CD4-positive, alpha-beta T cell (primary cell): ENCODE measurements at regions of chr16 and their contacts with region 1.

Region 1: DNA sequence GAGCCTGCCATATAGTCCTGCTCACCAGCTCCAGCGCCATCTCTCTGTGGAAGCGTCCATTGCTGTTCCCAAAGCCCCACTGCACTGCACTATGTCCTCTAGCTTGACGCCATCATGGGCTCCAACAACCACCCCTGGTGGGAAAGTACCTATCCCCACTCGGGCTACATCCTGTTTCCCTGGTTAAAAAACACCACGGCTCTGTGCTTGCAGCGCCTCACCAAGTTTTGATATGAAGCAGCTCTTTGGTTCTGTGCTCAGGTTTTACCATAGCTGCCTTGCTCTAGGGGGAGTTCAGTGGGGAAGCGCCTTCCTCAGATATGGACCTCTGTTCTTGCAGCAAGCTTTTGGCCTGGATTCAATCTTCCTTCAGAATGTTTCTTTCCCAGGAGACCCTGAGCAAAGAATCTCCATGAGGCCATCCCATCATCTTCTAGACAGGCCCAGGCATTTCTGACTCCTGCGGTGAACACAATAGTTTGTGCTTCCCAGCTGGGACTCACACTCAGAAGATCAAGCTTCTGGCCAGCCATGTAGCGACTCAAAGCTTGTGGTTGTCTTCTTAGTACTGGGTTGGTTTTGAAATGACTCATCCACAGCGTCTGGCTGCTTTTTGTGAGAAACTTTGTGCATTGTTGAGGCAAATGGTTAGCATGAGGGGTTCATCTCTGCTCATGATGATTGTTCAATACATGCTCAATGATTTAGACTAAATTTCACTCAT is 39.5 kb downstream of the DYNLRB2 start:
- DNase-seq: peak; percentile 36 to 82 (median 46)
- ATAC-seq: peak; percentile 92
- H3K4me3 ChIP-seq: peak overlapping the region; percentile 13
- H3K4me3 Mint-ChIP-seq: peak overlapping the region; percentile 52
- H3K27ac ChIP-seq: peak overlapping the region; percentile 60 to 64
- H3K27ac Mint-ChIP-seq: peak overlapping the region; percentile 80
- H3K4me1 ChIP-seq: peaks cover 38% of the 10 kb centered on the region
- H3K4me1 Mint-ChIP-seq: peaks cover 31% of the 10 kb centered on the region
- H3K27me3 ChIP-seq: no peaks in the 10 kb centered on the region
- H3K27me3 Mint-ChIP-seq: no peaks in the 10 kb centered on the region
- CTCF ChIP-seq: no peak

Region 2: DNA sequence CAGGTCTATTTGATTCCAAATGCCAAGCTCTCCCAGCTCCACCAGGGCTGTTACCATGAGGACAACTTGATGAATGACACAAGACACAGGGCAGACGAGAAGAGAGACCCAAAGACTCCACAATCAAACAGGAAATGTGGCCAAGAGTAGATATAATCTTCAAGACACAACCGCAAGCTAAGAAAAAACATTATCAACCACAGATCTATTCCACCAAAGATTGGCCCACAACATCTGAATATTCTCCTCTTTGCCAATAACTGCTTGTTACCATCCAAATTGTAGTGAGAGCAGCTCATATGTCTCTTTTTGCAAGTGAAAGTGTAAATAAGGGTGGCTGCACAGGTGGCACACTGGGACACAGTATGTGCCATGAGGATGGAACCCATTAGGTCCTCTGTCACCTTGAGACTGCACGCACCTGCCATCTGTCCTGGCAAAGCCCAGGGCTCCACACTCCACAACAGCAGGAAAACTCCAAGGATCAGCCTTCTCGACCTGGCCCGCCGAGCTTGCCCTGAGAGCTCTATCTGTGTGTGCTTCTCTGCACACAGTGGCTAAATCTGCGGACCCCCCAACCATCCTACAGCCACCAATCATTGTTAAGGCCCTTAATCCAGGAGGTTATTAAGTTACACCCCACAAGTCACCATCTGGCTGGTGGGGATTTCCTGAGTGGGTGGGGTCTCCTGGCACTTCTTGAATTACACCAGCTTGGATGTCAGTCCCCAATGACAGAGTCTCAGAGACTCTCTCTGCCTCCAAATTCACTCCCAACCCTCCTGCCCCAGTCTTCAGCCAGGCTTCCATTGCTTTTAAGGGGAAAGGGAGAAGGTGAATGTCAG is 11.0 kb after region 1 on chr16:
- CTCF ChIA-PET with region 1: interaction called, 3 read pairs
- POLR2A ChIA-PET with region 1: interaction called, 37 read pairs
- intact Hi-C with region 1: loop called in 1 of 2 experiments (anchors 1 kb)
- DNase-seq: peak in 7 of 14 experiments; percentile 1 to 80 (median 35)
- ATAC-seq: peak; percentile 84
- H3K4me3 ChIP-seq: peak overlapping the region; percentile 13
- H3K4me3 Mint-ChIP-seq: peak overlapping the region; percentile 17
- H3K27ac ChIP-seq: no peak overlapping the region
- H3K27ac Mint-ChIP-seq: peak overlapping the region; percentile 13
- H3K4me1 ChIP-seq: peaks cover 21% of the 10 kb centered on the region
- H3K4me1 Mint-ChIP-seq: peaks cover 24% of the 10 kb centered on the region
- H3K27me3 ChIP-seq: no peaks in the 10 kb centered on the region
- H3K27me3 Mint-ChIP-seq: no peaks in the 10 kb centered on the region
- CTCF ChIP-seq: no peak

Region 3: GRCh38 chr16:80610188-80611156 is 30.2 kb after region 1 on chr16:
- CTCF ChIA-PET with region 1: no interaction called
- POLR2A ChIA-PET with region 1: no interaction called
- intact Hi-C with region 1: no loop called
- DNase-seq: no peak
- ATAC-seq: no peak
- H3K4me3 ChIP-seq: no peak overlapping the region
- H3K4me3 Mint-ChIP-seq: no peak overlapping the region
- H3K27ac ChIP-seq: no peak overlapping the region
- H3K27ac Mint-ChIP-seq: no peak overlapping the region
- H3K4me1 ChIP-seq: peaks cover 16% of the 10 kb centered on the region
- H3K4me1 Mint-ChIP-seq: peaks cover 11% of the 10 kb centered on the region
- H3K27me3 ChIP-seq: no peaks in the 10 kb centered on the region
- H3K27me3 Mint-ChIP-seq: no peaks in the 10 kb centered on the region
- CTCF ChIP-seq: no peak

Region 4: GRCh38 chr16:80656711-80657150 is 76.5 kb after region 1 on chr16:
- CTCF ChIA-PET with region 1: no interaction called
- POLR2A ChIA-PET with region 1: interaction called, 5 read pairs
- intact Hi-C with region 1: loop called in 1 of 2 experiments (anchors 10 kb)
- DNase-seq: peak in 11 of 14 experiments; percentile 13 to 62 (median 35)
- ATAC-seq: peak; percentile 87
- H3K4me3 ChIP-seq: peak overlapping the region; percentile 54
- H3K4me3 Mint-ChIP-seq: peak overlapping the region; percentile 81
- H3K27ac ChIP-seq: peak overlapping the region; percentile 52 to 56
- H3K27ac Mint-ChIP-seq: peak overlapping the region; percentile 85
- H3K4me1 ChIP-seq: peaks cover 14% of the 10 kb centered on the region
- H3K4me1 Mint-ChIP-seq: peaks cover 27% of the 10 kb centered on the region
- H3K27me3 ChIP-seq: no peaks in the 10 kb centered on the region
- H3K27me3 Mint-ChIP-seq: no peaks in the 10 kb centered on the region
- CTCF ChIP-seq: no peak